Motor neuron (in vitro differentiated cells): ENCODE measurements at regions of chr4 and their contacts with region 1.

Region 1: GRCh38 chr4:109406338-109406931 is 27.2 kb upstream of the SEC24B start:
- ATAC-seq: peak; percentile 47 to 89 (median 60)
- H3K4me3 ChIP-seq: no peak overlapping the region
- H3K27ac ChIP-seq: no peak overlapping the region
- H3K4me1 ChIP-seq: peaks cover 0 to 5% of the 10 kb centered on the region in 2 donors

Region 2: GRCh38 chr4:108417923-108418322 is 988.5 kb before region 1 on chr4:
- in situ Hi-C with region 1: no loop called
- ATAC-seq: peak in 2 of 8 experiments; percentile 25 to 47
- H3K4me3 ChIP-seq: no peak overlapping the region
- H3K27ac ChIP-seq: no peak overlapping the region
- H3K4me1 ChIP-seq: no peaks in the 10 kb centered on the region

Region 3: DNA sequence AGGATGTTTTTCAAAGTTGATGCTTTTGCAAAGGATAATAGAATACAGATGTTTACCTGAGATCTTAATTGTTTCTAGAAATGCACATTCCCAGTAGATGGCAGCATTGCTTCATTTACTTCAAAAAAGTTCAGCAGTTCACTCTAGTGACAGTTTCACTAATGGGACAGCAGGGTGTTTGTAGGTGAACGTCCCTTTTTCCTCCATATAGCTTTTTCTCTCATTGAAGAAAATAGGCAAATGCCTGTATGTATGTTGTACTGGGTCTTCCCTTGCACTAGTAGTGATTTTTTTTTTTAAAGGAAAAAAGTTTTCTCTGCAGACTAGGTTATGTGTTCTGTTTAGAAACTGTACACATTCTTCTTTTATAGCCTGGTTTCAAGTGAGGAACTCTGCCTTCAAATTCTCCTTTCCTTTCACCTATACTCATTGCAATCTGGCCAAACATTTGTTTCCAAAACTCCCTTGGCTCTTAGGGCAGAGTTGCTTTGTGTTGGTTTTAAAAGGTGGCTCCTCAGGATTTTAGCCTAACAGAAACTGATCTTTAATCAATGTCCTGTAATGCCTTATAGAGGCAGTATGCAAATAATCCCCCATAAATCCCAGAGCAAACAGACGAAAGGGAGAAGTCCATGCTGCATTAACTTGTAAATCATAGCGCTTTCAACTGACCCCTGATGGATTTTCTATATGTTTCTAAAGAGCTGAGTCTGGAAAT is 592.6 kb after region 1 on chr4:
- in situ Hi-C with region 1: loop called in 1 of 9 experiments (anchors 25 kb)
- ATAC-seq: peak in 7 of 8 experiments; percentile 34 to 81 (median 67)
- H3K4me3 ChIP-seq: no peak overlapping the region
- H3K27ac ChIP-seq: no peak overlapping the region
- H3K4me1 ChIP-seq: no peaks in the 10 kb centered on the region